ENCODE measurements at regions of chr19 and their contacts with region 1.

Region 1: GRCh38 chr19:21835810-21836444 is at the start of gene ZNF43:
- DNase-seq: peak; percentile 92
- ATAC-seq: peak; percentile 98
- H3K4me3 ChIP-seq: peak within 1 kb of the TSS; percentile 61 to 96 (median 74)
- H3K4me3 Mint-ChIP-seq: peak within 1 kb of the TSS; percentile 99
- H3K27ac ChIP-seq: peak within 1 kb of the TSS; percentile 81 to 93
- H3K27ac Mint-ChIP-seq: peak within 1 kb of the TSS; percentile 99
- H3K4me1 ChIP-seq: peaks cover 4 to 17% of the 10 kb centered on the region in 2 donors
- H3K4me1 Mint-ChIP-seq: peaks cover 30% of the 10 kb centered on the region
- H3K27me3 ChIP-seq: no peaks in the 10 kb centered on the region
- H3K27me3 Mint-ChIP-seq: no peaks in the 10 kb centered on the region
- CTCF ChIP-seq: no peak
- total RNA-seq, gene ZNF43: 59.8 and 69.9 TPM in 2 replicates

Region 2: DNA sequence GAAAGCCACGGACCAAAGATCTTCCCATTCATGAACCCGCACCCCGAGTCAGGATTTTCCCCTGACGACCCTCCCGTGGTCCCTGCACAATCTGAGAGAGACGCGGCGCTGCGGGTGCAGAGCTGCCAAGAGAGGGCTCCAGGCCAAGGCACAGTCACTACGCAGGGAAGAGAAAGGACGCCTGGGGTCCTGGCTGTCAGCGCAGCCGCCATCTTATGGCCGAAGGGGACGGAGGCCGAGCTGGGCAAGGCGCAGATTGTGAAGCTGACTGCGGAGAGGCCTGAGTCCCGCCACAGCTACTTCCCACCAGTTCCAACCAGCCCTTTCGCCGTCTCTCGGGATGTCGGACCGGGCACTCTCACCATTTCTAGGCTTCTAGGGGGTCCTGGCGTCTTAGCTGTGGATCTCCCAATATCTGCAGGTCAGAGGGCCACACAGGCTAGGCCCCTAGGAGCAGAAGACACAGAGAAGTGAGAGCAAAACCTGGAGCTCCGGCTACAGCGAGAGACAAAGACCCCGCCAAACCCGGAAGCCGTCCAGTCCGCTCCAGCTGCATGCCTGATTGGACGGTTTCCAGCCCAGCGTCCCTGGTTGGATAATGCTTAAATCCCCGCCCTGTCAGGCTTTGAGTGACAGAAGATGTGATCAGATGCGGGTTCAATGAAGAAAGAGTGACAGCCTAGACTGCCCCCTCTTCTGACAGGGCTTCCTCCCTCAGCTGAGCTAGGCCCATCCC is 68.7 kb before region 1 on chr19 and contains the start of gene ZNF100:
- CTCF ChIA-PET with region 1: interaction called, 4 read pairs
- POLR2A ChIA-PET with region 1: interaction called, 6 read pairs
- intact Hi-C with region 1: loop called (anchors 1 kb)
- DNase-seq: peak; percentile 89
- ATAC-seq: peak; percentile 97
- H3K4me3 ChIP-seq: peak within 1 kb of the TSS; percentile 77 to 91 (median 79)
- H3K4me3 Mint-ChIP-seq: peak within 1 kb of the TSS; percentile 96
- H3K27ac ChIP-seq: peak within 1 kb of the TSS; percentile 82 to 90
- H3K27ac Mint-ChIP-seq: peak within 1 kb of the TSS; percentile 90
- H3K4me1 ChIP-seq: peaks cover 9 to 10% of the 10 kb centered on the region in 2 donors
- H3K4me1 Mint-ChIP-seq: peaks cover 17% of the 10 kb centered on the region
- H3K27me3 ChIP-seq: no peaks in the 10 kb centered on the region
- H3K27me3 Mint-ChIP-seq: no peaks in the 10 kb centered on the region
- CTCF ChIP-seq: no peak
- total RNA-seq, gene ZNF100: 16.0 and 21.6 TPM in 2 replicates

Region 3: GRCh38 chr19:21789466-21790080 is 46.4 kb before region 1 on chr19:
- CTCF ChIA-PET with region 1: no interaction called
- POLR2A ChIA-PET with region 1: no interaction called
- intact Hi-C with region 1: no loop called
- DNase-seq: no peak
- ATAC-seq: no peak
- H3K4me3 ChIP-seq: no peak overlapping the region
- H3K4me3 Mint-ChIP-seq: no peak overlapping the region
- H3K27ac ChIP-seq: no peak overlapping the region
- H3K27ac Mint-ChIP-seq: no peak overlapping the region
- H3K4me1 ChIP-seq: no peaks in the 10 kb centered on the region
- H3K4me1 Mint-ChIP-seq: peaks cover 2% of the 10 kb centered on the region
- H3K27me3 ChIP-seq: no peaks in the 10 kb centered on the region
- H3K27me3 Mint-ChIP-seq: no peaks in the 10 kb centered on the region
- CTCF ChIP-seq: no peak

Region 4: DNA sequence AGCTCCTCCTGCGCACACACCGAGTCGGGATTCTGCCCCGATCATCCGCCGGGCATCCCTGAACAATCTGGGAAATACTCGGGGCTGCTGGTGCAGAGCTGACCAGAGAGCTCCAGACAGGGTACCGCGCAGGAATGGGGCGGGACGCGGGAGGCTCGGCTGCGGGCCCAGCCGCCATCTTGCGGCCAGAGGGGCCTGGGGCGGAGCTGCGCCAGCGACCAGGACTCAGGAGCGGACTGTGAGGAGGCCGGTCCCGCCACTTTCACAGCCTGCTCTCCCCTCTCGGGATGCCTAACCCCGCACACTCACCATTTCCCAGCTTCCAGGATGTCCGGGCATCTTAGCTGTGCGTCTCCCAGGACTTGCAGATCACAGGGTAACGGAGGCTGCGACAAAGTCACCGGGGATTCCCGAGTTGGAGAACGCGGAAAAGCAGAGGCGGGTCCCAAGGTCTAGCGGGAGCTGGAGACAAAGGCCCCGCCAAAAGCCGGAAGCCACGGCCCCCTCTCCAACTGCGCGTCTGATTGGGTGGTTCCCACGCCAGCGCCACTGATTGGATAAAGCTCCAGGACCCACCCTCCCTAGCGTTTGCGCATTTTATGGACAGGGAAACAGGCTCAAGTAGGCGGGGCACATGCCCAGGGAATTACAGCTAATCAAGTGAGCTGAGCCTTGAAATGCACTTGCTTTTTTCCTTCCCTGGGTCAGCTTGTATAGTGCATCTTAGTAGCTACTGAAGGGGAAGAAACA is 15.8 kb after region 1 on chr19:
- CTCF ChIA-PET with region 1: interaction called, 4 read pairs
- POLR2A ChIA-PET with region 1: interaction called, 12 read pairs
- intact Hi-C with region 1: loop called (anchors 1 kb)
- DNase-seq: peak; percentile 90
- ATAC-seq: peak; percentile 99
- H3K4me3 ChIP-seq: peak overlapping the region; percentile 68 to 98 (median 96)
- H3K4me3 Mint-ChIP-seq: peak overlapping the region; percentile 95
- H3K27ac ChIP-seq: peak overlapping the region; percentile 74 to 93
- H3K27ac Mint-ChIP-seq: peak overlapping the region; percentile 91
- H3K4me1 ChIP-seq: peaks cover 5 to 15% of the 10 kb centered on the region in 2 donors
- H3K4me1 Mint-ChIP-seq: peaks cover 21% of the 10 kb centered on the region
- H3K27me3 ChIP-seq: no peaks in the 10 kb centered on the region
- H3K27me3 Mint-ChIP-seq: no peaks in the 10 kb centered on the region
- CTCF ChIP-seq: no peak

Region 5: GRCh38 chr19:23273590-23274413 is 1437.9 kb after region 1 on chr19:
- CTCF ChIA-PET with region 1: no interaction called
- POLR2A ChIA-PET with region 1: no interaction called
- intact Hi-C with region 1: loop called (anchors 10 kb)
- DNase-seq: peak; percentile 91
- ATAC-seq: peak; percentile 99
- H3K4me3 ChIP-seq: peak overlapping the region; percentile 81 to 99 (median 96)
- H3K4me3 Mint-ChIP-seq: peak overlapping the region; percentile 98
- H3K27ac ChIP-seq: peak overlapping the region; percentile 85 to 89
- H3K27ac Mint-ChIP-seq: peak overlapping the region; percentile 97
- H3K4me1 ChIP-seq: peaks cover 6 to 20% of the 10 kb centered on the region in 2 donors
- H3K4me1 Mint-ChIP-seq: peaks cover 30% of the 10 kb centered on the region
- H3K27me3 ChIP-seq: no peaks in the 10 kb centered on the region
- H3K27me3 Mint-ChIP-seq: no peaks in the 10 kb centered on the region
- CTCF ChIP-seq: no peak

Measured in B cell (primary cell).